ENCODE measurements at regions of chr3 and their contacts with region 1.

Region 1: GRCh38 chr3:113264283-113265131 is 53.1 kb downstream of the BOC start:
- DNase-seq: peak in 2 of 6 donors; percentile 43 to 56
- ATAC-seq: peak; percentile 62 to 80 (median 66)
- H3K4me3 ChIP-seq: no peak overlapping the region
- H3K27ac ChIP-seq: peak overlapping the region in 1 of 4 donors; percentile 1
- H3K4me1 ChIP-seq: peaks cover 0 to 23% (median 22%) of the 10 kb centered on the region in 3 donors
- H3K27me3 ChIP-seq: no peaks in the 10 kb centered on the region
- CTCF ChIP-seq: no peak

Region 2: GRCh38 chr3:113204371-113204770 is 60.1 kb before region 1 on chr3:
- intact Hi-C with region 1: no loop called
- DNase-seq: no peak
- ATAC-seq: no peak
- H3K4me3 ChIP-seq: no peak overlapping the region
- H3K27ac ChIP-seq: no peak overlapping the region
- H3K4me1 ChIP-seq: no peaks in the 10 kb centered on the region
- H3K27me3 ChIP-seq: no peaks in the 10 kb centered on the region
- CTCF ChIP-seq: no peak

Region 3: DNA sequence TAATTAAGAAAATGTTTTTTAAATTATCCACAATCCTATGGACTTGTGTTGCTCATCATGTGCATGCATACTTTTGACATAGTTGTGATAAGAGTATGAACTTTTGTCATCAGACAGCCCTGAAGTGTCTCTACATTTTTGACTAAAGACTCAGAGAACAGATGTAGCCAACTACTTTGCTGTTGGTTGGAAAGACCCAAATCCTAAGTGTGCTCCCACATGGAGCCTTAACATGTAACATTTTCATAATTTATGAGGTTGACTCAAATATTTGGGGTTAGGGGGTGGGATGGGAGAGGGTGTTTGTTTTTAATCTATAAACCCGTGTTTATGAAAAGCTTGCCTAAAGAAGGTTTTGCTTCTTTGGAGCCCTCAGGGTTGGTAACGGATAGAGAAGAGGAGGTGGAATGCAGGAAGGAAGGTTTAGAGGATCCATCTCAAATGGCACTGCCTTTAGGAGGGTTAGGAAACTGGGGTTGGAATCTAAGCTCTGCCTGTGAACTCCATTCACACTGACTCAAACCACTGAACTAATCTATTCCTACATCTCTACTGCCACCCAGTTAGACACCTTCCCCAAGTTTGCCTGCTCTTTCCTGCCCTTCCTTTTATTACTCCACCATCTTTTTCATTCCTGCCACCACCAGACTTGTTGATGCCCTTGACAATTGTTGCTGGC is 49.5 kb before region 1 on chr3:
- intact Hi-C with region 1: loop called in 1 of 3 experiments (anchors 5 kb)
- DNase-seq: no peak
- ATAC-seq: no peak
- H3K4me3 ChIP-seq: no peak overlapping the region
- H3K27ac ChIP-seq: no peak overlapping the region
- H3K4me1 ChIP-seq: peaks cover 0 to 4% (median 0%) of the 10 kb centered on the region in 3 donors
- H3K27me3 ChIP-seq: no peaks in the 10 kb centered on the region
- CTCF ChIP-seq: no peak

Region 4: GRCh38 chr3:113291572-113291971 is 27.1 kb after region 1 on chr3:
- intact Hi-C with region 1: no loop called
- DNase-seq: no peak
- ATAC-seq: no peak
- H3K4me3 ChIP-seq: no peak overlapping the region
- H3K27ac ChIP-seq: no peak overlapping the region
- H3K4me1 ChIP-seq: peaks cover 0 to 7% (median 0%) of the 10 kb centered on the region in 3 donors
- H3K27me3 ChIP-seq: no peaks in the 10 kb centered on the region
- CTCF ChIP-seq: no peak

Region 5: GRCh38 chr3:113623324-113623723 is 358.8 kb after region 1 on chr3:
- intact Hi-C with region 1: no loop called
- DNase-seq: no peak
- ATAC-seq: peak in 1 of 4 donors; percentile 12
- H3K4me3 ChIP-seq: no peak overlapping the region
- H3K27ac ChIP-seq: no peak overlapping the region
- H3K4me1 ChIP-seq: no peaks in the 10 kb centered on the region
- H3K27me3 ChIP-seq: no peaks in the 10 kb centered on the region
- CTCF ChIP-seq: no peak

Region 6: DNA sequence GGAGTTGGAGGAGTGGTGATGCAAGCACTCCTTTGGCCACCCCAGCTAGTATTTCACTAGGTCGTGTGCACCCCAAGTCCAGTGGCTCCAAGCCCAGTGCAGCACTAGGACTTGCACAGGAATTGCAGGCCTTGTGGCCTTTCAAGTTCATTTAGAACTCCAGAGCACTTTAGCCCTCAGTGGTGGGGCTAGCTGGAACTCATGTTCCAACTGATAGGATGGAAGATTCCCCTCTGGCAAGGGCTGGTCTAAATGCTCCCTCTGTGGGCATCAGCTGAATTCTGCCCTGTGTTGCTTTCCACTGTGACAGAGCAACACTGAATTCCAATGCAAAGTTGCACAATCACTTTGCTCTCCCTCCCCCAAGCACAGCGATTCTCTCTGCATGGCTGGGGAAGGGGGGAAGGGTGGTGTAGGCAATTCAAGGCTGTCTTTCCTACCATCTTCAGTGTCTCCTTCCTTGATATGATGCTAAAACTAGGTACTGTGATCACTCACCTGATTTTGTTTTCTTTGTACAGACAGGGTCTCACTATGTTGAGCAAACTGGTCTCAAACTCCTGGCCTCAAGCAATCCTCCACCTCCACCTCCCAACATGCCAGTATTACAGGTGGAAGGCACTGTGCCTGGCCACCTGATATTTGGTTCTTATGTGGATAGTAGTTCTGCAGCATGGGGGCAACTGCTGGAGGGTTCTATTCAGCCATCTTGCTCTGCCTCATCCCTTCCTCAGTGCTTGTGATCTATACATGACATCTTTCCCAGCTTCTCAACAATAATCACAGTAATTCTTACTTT is 421.6 kb after region 1 on chr3:
- intact Hi-C with region 1: no loop called
- DNase-seq: no peak
- ATAC-seq: peak in 3 of 4 donors; percentile 61 to 64 (median 62)
- H3K4me3 ChIP-seq: no peak overlapping the region
- H3K27ac ChIP-seq: no peak overlapping the region
- H3K4me1 ChIP-seq: peaks cover 2 to 7% (median 3%) of the 10 kb centered on the region in 3 donors
- H3K27me3 ChIP-seq: no peaks in the 10 kb centered on the region
- CTCF ChIP-seq: no peak